HEK293 (cell line): ENCODE measurements at regions of chr14 and their contacts with region 1.

Region 1: DNA sequence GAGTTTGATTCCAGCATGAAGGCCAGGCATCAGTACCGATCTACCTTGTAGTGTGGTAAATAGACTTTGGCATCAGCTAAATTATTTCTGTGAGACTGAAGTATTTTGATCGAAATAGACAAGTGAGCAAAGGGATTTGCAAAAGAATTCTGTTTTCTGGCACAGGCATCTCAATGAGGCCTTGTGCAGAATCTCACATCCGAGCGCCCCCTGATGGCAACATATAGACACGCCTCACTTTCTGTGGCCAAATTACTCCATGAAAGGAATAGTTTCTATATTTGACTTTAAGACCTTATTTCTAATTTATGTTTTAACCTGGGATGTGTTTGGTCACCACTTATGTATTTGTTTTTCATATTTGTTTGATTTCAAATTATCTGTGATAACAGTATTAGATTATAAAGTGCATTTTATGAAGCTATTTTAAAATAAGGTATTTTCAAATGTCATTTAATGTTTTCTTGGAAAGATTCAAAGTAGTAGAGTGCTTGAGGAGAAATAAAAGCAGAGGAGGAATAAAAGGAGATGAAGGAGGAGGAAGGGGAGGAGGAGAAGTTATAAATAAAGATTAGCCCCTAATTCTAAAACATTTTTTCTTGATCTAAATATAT is 731.9 kb downstream of the NRXN3 start:
- H3K4me3 ChIP-seq: no peak overlapping the region
- H3K27ac ChIP-seq: no peak overlapping the region
- H3K4me1 ChIP-seq: no peaks in the 10 kb centered on the region
- CTCF ChIP-seq: no peak

Region 2: GRCh38 chr14:78891263-78891662 is 10.9 kb before region 1 on chr14:
- CTCF ChIA-PET with region 1: interaction called, 25 read pairs
- POLR2A ChIA-PET with region 1: no interaction called
- H3K4me3 ChIP-seq: no peak overlapping the region
- H3K27ac ChIP-seq: no peak overlapping the region
- H3K4me1 ChIP-seq: no peaks in the 10 kb centered on the region
- CTCF ChIP-seq: no peak